Heart left ventricle (tissue), 16 donors: ENCODE measurements at regions of chr4 and their contacts with region 1.

Region 1: GRCh38 chr4:184460499-184461285 is 13.7 kb downstream of the IRF2 start:
- DNase-seq: no peak
- ATAC-seq: no peak
- H3K4me3 ChIP-seq: no peak overlapping the region
- H3K27ac ChIP-seq: peak overlapping the region in 1 of 12 donors; percentile 27
- H3K4me1 ChIP-seq: peaks cover 14 to 80% (median 58%) of the 10 kb centered on the region in 12 donors
- H3K27me3 ChIP-seq: no peaks in the 10 kb centered on the region
- CTCF ChIP-seq: no peak
- POLR2A ChIP-seq: no peak

Region 2: DNA sequence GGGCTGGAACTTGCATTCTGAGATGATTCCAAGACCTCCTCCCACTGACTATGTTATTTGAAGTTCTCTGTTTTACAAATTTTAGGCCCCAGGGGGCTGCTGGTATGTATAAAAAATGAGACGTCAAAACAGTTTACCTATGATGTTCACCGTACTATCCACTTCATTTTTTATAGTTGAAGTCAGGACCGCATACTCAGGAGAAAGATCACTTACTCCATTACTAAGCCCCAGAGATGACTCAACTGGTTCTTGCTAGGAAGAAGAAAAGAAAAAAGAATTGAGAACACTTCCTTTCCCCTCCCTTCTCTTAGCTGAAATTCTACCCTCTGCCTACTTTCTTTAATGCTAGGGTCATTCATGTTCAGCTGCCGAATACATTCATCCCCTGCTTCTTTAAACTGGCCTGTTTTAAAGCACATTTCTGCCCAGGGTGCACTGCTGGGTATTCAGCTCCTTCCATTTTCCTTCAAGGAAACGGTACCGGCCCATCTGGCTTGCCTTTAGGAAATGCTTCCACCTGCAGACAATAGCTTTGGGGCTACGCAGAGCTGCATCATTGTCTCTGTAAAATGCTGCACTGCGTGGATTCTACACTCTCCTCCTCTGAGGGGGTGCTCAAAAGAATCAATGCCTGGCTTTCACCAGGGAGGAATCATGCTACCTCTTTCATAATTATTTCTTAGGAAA is 52.5 kb before region 1 on chr4:
- intact Hi-C with region 1: loop called in 1 of 10 experiments (anchors 5 kb)
- DNase-seq: no peak
- ATAC-seq: no peak
- H3K4me3 ChIP-seq: no peak overlapping the region
- H3K27ac ChIP-seq: peak overlapping the region in 11 of 12 donors; percentile 44 to 78 (median 62)
- H3K4me1 ChIP-seq: peaks cover 0 to 78% (median 57%) of the 10 kb centered on the region in 12 donors
- H3K27me3 ChIP-seq: no peaks in the 10 kb centered on the region
- CTCF ChIP-seq: no peak
- POLR2A ChIP-seq: no peak